ENCODE measurements at regions of chr5 and their contacts with region 1.

Region 1: DNA sequence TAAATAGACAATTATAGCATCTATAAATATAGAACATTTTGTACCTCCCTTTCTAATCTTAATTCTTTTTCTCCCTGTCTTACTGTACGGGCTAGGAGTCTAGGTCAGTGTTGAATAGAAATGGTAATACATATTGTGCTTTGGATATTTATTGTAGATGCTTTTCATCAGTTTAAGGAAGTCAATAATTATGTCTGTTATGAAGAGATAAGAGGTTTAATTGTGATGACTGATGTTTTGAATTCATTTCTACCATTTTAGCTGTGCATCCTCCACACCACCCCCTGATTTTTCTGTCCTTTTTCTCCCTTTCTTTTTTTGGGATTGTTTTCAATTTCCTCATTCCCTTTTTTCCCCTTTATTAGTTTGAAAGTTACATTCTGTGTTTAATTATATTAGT is 95.8 kb downstream of the DOCK2 start:
- DNase-seq: no peak
- ATAC-seq: no peak

Region 2: GRCh38 chr5:169753795-169754194 is 21.0 kb after region 1 on chr5:
- intact Hi-C with region 1: loop called (anchors 1 kb)
- DNase-seq: no peak
- ATAC-seq: peak; percentile 64

Measured in sciatic nerve (tissue), 2 donors.